Prostate gland (tissue), 2 donors: ENCODE measurements at regions of chr1 and their contacts with region 1.

Region 1: DNA sequence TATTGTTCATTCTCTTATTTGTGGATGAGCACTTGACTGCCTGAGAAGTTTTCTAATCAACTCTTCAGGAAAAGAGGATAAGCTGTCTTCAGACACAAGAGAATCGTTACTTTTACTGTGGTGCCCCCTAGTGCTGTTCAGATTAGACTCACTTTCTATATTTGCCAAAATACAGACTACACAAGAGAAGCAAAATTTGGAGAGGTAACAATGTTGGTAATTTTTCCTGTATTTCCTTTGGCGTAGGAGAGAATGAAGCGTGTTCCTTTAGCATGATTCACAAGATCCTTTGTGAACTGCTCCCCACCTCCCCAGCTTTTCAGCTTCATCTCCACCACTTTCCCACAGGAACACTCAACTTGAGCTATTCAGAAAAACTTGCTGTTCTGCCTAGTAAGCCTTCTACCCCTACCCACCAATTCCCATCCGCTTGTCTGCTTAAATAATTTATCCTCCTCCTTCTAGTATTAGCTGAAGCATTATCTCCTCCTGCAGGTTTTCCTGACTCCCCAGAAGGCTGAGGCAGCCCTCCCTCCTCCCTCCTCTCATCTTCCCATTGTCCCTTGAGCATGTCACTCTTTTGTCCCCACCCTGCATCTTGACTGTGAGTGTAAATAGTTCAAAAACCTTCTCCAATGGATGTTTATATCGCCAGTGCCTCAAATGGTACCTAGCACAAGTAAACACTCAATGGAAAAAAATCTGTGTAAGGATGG is 4.5 kb downstream of the TNFSF4 start:
- DNase-seq: peak; percentile 41
- H3K4me3 ChIP-seq: no peak overlapping the region
- H3K27ac ChIP-seq: no peak overlapping the region
- H3K4me1 ChIP-seq: no peaks in the 10 kb centered on the region
- H3K27me3 ChIP-seq: no peaks in the 10 kb centered on the region
- CTCF ChIP-seq: peak; percentile 35 to 82 (median 61)
- POLR2A ChIP-seq: no peak

Region 2: DNA sequence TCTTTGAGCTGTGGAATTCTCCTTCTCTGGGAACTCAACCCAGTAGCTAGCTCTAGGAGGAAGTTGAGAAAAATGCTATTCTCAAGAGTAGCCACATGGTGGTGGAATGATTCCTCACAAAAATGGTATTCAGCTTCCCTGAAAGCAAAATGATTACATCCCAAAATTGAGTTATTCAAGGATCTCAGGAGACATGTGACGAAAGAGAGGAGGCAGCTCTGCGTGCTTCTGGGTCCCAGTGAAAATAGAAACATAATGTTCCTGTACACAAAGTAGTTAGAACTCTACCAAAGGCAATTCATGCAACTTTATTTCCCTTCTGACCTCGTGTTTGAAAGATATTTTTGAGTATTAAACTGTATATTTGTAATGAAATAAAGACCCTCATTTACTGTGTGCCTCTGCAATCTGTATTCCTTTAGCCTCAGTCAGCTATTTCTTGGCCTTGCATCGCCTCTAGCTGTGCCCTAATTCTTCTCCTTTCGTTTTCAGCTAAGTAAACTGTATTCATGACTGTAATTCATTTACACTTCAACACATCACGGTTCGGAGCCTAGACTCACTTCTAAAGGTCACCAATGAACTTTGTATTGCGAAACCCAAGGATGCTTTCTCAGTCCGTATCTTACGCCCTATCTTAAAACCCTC is 376.4 kb before region 1 on chr1:
- intact Hi-C with region 1: loop called (anchors 2 kb)
- DNase-seq: no peak
- H3K4me3 ChIP-seq: no peak overlapping the region
- H3K27ac ChIP-seq: no peak overlapping the region
- H3K4me1 ChIP-seq: no peaks in the 10 kb centered on the region
- H3K27me3 ChIP-seq: no peaks in the 10 kb centered on the region
- CTCF ChIP-seq: peak in 3 of 4 experiments; percentile 50 to 71 (median 64)
- POLR2A ChIP-seq: no peak

Region 3: GRCh38 chr1:173149887-173150286 is 52.7 kb before region 1 on chr1:
- intact Hi-C with region 1: no loop called
- DNase-seq: no peak
- H3K4me3 ChIP-seq: no peak overlapping the region
- H3K27ac ChIP-seq: no peak overlapping the region
- H3K4me1 ChIP-seq: no peaks in the 10 kb centered on the region
- H3K27me3 ChIP-seq: no peaks in the 10 kb centered on the region
- CTCF ChIP-seq: no peak
- POLR2A ChIP-seq: no peak